Naive thymus-derived CD4-positive, alpha-beta T cell (primary cell): ENCODE measurements at regions of chr12 and their contacts with region 1.

Region 1: DNA sequence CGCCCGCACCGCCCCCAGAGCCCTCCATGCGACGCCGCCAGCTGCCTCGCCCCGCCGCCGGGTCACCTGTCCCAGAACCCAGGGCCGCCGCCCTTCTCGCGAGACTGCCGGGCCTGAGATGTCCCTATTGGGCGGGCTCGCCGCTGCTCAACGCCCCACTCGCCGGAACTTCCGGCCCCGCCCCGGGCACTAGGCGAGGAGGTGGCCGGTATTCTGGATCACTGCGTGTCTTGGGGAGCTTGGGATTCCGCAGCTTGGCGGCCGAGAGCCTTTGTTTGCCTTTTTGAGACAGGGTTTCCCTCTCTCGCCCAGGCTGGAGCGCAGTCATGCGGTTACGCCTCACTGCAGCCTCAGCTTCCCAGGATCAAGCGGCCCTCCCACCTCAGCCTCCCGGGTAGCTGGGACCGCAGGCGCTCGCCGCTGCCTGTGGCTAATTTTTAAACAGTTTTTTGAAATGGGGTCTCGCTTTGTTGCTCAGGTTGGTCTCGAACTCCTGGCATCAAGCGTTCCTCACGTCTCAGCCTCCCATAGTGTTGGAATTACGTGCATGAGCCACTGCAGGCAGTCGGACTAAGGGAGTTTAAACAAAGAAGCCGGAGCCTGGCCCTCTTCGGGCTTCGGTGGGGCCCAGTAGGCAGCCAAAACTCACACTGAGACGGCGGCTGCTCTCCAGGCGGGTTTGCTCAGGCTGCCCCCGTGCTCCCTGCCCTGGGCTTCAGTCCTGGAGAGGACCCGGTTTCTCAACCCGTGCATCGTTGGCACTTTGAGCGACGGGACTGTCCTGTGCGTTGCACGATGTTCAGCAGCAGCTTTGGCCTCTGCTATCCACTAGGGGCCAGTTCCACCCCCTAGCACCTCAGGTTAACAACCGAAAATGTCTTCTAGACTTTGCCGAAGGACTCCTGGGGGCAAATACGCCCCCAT is at the start of gene SLC15A4:
- DNase-seq: peak; percentile 73 to 97 (median 82)
- ATAC-seq: peak; percentile 92
- H3K4me3 ChIP-seq: peak within 1 kb of the TSS; percentile 85
- H3K4me3 Mint-ChIP-seq: peak within 1 kb of the TSS; percentile 76 to 90 (median 83)
- H3K27ac ChIP-seq: peak within 1 kb of the TSS; percentile 60
- H3K27ac Mint-ChIP-seq: peak within 1 kb of the TSS in 8 of 9 donors; percentile 21 to 83 (median 35)
- H3K4me1 ChIP-seq: peaks cover 21 to 22% of the 10 kb centered on the region in 2 donors
- H3K4me1 Mint-ChIP-seq: peaks cover 21 to 39% (median 31%) of the 10 kb centered on the region in 7 donors
- H3K27me3 ChIP-seq: no peaks in the 10 kb centered on the region
- H3K27me3 Mint-ChIP-seq: peaks cover 0 to 7% (median 4%) of the 10 kb centered on the region in 5 donors
- total RNA-seq, gene SLC15A4: 9.5 to 44.5 (median 17.6) TPM

Region 2: DNA sequence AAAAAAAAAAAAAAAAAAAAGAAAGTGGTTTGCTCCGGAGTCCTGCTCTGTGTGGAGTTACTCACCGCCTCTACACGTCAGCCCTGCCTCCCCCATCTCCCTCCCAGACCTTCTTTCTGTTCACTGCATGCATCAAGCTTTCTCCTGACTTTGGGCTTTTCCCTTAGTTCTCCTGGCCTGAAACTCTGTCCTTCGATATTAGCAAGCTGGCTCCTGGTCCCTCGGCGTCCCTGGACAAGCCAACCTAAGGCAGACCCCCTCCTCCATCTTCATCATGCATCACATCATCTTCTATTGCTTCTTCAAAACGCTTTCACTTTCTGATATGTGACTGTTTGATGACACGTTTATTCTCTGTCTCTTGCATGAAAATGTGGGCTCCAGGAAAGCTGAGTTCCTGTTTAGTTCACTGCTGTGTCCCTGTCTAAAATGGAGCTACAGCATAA is 41.0 kb before region 1 on chr12:
- CTCF ChIA-PET with region 1: no interaction called
- POLR2A ChIA-PET with region 1: no interaction called
- intact Hi-C with region 1: loop called in 1 of 2 experiments (anchors 2 kb)
- DNase-seq: peak in 4 of 9 donors; percentile 6 to 28 (median 22)
- ATAC-seq: peak; percentile 86
- H3K4me3 ChIP-seq: no peak overlapping the region
- H3K4me3 Mint-ChIP-seq: peak overlapping the region; percentile 22 to 83 (median 68)
- H3K27ac ChIP-seq: no peak overlapping the region
- H3K27ac Mint-ChIP-seq: peak overlapping the region in 6 of 9 donors; percentile 33 to 92 (median 78)
- H3K4me1 ChIP-seq: no peaks in the 10 kb centered on the region
- H3K4me1 Mint-ChIP-seq: peaks cover 5 to 16% (median 9%) of the 10 kb centered on the region in 7 donors
- H3K27me3 ChIP-seq: no peaks in the 10 kb centered on the region
- H3K27me3 Mint-ChIP-seq: peaks cover 0 to 6% (median 0%) of the 10 kb centered on the region in 5 donors

Region 3: DNA sequence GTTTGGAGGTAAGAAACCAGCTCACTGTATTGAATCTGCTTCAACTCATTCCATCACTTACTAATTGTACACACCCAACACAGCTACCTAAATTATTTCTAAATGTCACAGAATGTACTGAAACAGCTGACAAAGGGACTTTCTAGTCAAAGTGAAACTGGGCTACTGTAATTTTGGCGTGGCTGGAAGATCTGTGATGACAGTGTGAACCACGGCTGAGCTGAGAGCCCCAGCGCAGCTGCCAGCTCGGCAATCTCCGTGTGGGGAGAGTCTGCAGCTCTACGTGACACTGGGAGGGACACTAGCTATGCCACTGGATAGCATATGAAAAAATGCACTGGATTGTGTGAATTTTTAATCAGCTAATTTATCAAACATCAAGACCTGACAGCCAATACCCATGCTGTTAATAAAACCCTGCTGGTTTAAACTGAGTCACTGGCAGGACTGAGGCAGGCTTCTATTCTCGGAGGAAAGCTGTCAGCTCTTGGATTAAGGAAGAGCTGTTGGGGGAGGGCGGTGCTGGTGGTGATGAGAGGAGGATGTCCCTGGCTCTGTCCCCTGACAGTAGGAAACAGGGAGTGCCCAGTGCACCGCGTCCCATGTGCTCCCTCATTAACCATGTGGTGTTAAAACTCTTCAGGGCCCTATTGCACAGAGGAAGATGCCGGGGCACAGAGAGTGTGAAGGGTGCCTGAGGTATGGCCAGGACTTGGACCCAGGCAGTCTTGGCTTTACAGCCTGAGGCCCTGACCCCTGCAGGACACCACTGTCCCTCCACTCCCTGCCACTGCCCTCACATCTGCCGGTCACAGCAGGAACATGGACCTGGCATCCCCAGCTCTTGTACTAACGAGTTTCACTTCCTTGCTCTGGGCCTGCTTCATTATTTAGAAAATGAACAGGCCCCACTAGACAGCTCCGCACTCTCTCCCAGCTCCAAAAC is 13.7 kb before region 1 on chr12:
- CTCF ChIA-PET with region 1: no interaction called
- POLR2A ChIA-PET with region 1: no interaction called
- intact Hi-C with region 1: loop called in 1 of 2 experiments (anchors 1 kb)
- DNase-seq: peak in 1 of 9 donors; percentile 51
- ATAC-seq: peak; percentile 75
- H3K4me3 ChIP-seq: no peak overlapping the region
- H3K4me3 Mint-ChIP-seq: peak overlapping the region in 5 of 10 donors; percentile 3 to 76 (median 28)
- H3K27ac ChIP-seq: no peak overlapping the region
- H3K27ac Mint-ChIP-seq: peak overlapping the region in 6 of 9 donors; percentile 12 to 88 (median 43)
- H3K4me1 ChIP-seq: peaks cover 0 to 24% of the 10 kb centered on the region in 2 donors
- H3K4me1 Mint-ChIP-seq: peaks cover 17 to 52% (median 29%) of the 10 kb centered on the region in 7 donors
- H3K27me3 ChIP-seq: no peaks in the 10 kb centered on the region
- H3K27me3 Mint-ChIP-seq: no peaks in the 10 kb centered on the region

Region 4: GRCh38 chr12:128914908-128915563 is 90.9 kb after region 1 on chr12:
- CTCF ChIA-PET with region 1: no interaction called
- POLR2A ChIA-PET with region 1: no interaction called
- intact Hi-C with region 1: loop called in 1 of 2 experiments (anchors 2 kb)
- DNase-seq: peak in 8 of 9 donors; percentile 19 to 75 (median 50)
- ATAC-seq: peak; percentile 88
- H3K4me3 ChIP-seq: no peak overlapping the region
- H3K4me3 Mint-ChIP-seq: peak overlapping the region in 3 of 10 donors; percentile 6 to 70 (median 8)
- H3K27ac ChIP-seq: no peak overlapping the region
- H3K27ac Mint-ChIP-seq: peak overlapping the region in 4 of 9 donors; percentile 8 to 74 (median 33)
- H3K4me1 ChIP-seq: no peaks in the 10 kb centered on the region
- H3K4me1 Mint-ChIP-seq: peaks cover 0 to 35% (median 9%) of the 10 kb centered on the region in 7 donors
- H3K27me3 ChIP-seq: no peaks in the 10 kb centered on the region
- H3K27me3 Mint-ChIP-seq: peaks cover 0 to 15% (median 0%) of the 10 kb centered on the region in 5 donors